ENCODE measurements at regions of chr15 and their contacts with region 1.

Region 1: GRCh38 chr15:69058830-69059556 is 44.5 kb downstream of the NOX5 start:
- DNase-seq: peak; percentile 73 to 94
- H3K4me3 ChIP-seq: no peak overlapping the region
- H3K27ac ChIP-seq: no peak overlapping the region
- H3K4me1 ChIP-seq: peaks cover 3 to 8% (median 5%) of the 10 kb centered on the region in 4 experiments; a peak in 6 of 7 replicates
- H3K27me3 ChIP-seq: no peaks in the 10 kb centered on the region; a peak in 1 of 7 replicates
- CTCF ChIP-seq: peak; percentile 87 to 99 (median 94)
- EP300 ChIP-seq: 0 out of 3 replicates have a peak, but pooled peaks of 1 of the 2 experiments have one; percentile 19
- POLR2A ChIP-seq: no peak
- RAD21 ChIP-seq: peak; percentile 99 to 100

Region 2: DNA sequence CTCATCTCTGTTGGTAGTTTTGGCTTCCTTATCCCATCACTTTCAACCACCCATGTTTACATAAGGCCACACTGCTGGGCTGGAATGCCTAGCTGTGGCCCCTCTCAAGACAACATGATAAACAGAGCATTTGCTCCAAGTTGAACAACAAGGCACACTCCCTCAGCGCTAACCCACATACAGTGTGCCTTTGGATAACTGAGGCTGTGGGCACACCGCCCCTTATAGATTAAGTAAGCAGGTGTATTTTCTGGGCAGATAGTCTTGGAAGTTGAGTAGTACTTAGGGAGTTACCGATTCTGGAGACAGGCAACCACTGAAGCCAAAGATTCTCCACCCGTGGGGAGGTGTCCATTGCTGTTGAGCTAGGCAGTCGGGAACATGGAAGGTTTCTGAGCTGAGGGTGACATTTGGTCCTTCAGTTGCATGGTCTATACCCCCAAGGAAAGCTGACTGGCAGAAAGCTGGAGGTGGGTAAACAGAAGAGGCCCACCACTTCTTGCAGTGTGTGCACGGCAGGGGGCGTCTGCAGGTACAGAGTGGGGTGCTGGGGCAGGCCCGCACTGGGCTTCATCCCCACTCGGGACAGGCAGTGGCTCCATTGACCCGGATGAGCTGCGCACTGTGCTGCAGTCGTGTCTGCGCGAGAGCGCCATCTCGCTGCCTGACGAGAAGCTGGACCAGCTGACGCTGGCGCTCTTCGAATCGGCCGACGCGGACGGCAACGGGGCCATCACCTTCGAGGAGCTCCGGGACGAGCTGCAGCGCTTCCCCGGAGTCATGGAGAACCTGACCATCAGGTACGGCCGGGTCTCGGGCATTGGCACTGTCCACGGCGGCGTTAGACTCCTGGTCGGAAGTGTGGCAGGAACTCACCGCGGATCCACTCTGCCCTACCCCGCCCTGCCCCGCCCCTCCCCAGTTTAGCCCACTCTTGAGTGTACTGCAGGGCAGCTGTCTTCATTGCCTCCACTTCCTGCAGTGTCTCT is 27.7 kb before region 1 on chr15:
- CTCF ChIA-PET with region 1: interaction called, 10 read pairs
- POLR2A ChIA-PET with region 1: interaction called, 3 read pairs
- DNase-seq: peak; percentile 53 to 81
- H3K4me3 ChIP-seq: peak overlapping the region in 2 of 4 experiments; percentile 23 to 50; a peak in 5 of 8 replicates
- H3K27ac ChIP-seq: no peak overlapping the region
- H3K4me1 ChIP-seq: peaks cover 0 to 4% (median 1%) of the 10 kb centered on the region in 4 experiments; a peak in 3 of 7 replicates
- H3K27me3 ChIP-seq: peaks cover 0 to 8% (median 0%) of the 10 kb centered on the region in 4 experiments; a peak in 3 of 7 replicates
- CTCF ChIP-seq: peak; percentile 84 to 92 (median 91)
- EP300 ChIP-seq: peak in 1 of 2 experiments; percentile 34; a peak in 1 of 3 replicates
- POLR2A ChIP-seq: no peak
- RAD21 ChIP-seq: peak; percentile 70 to 80

Region 3: GRCh38 chr15:69045808-69046207 is 13.2 kb before region 1 on chr15:
- CTCF ChIA-PET with region 1: interaction called, 11 read pairs
- POLR2A ChIA-PET with region 1: interaction called, 4 read pairs
- DNase-seq: no peak
- H3K4me3 ChIP-seq: no peak overlapping the region
- H3K27ac ChIP-seq: no peak overlapping the region
- H3K4me1 ChIP-seq: peaks cover 0 to 2% (median 1%) of the 10 kb centered on the region in 4 experiments; a peak in 1 of 7 replicates
- H3K27me3 ChIP-seq: no peaks in the 10 kb centered on the region; a peak in 2 of 7 replicates
- CTCF ChIP-seq: peak in 2 of 3 experiments; percentile 15 to 22; a peak in 2 of 4 replicates
- EP300 ChIP-seq: no peak
- POLR2A ChIP-seq: no peak
- RAD21 ChIP-seq: peak in 1 of 2 experiments; percentile 15; a peak in 1 of 4 replicates

Region 4: GRCh38 chr15:69225355-69226025 is 166.5 kb after region 1 on chr15:
- CTCF ChIA-PET with region 1: interaction called, 28 read pairs
- POLR2A ChIA-PET with region 1: no interaction called
- DNase-seq: no peak
- H3K4me3 ChIP-seq: no peak overlapping the region
- H3K27ac ChIP-seq: no peak overlapping the region
- H3K4me1 ChIP-seq: peaks cover 0 to 8% (median 3%) of the 10 kb centered on the region in 4 experiments; a peak in 4 of 7 replicates
- H3K27me3 ChIP-seq: peaks cover 0 to 1% (median 0%) of the 10 kb centered on the region in 4 experiments; a peak in 1 of 7 replicates
- CTCF ChIP-seq: peak in 2 of 3 experiments; percentile 24 to 38; a peak in 2 of 4 replicates
- EP300 ChIP-seq: no peak
- POLR2A ChIP-seq: no peak
- RAD21 ChIP-seq: peak; percentile 67 to 68

Region 5: GRCh38 chr15:69265347-69265955 is 206.5 kb after region 1 on chr15:
- CTCF ChIA-PET with region 1: interaction called, 70 read pairs
- POLR2A ChIA-PET with region 1: no interaction called
- DNase-seq: no peak
- H3K4me3 ChIP-seq: no peak overlapping the region
- H3K27ac ChIP-seq: no peak overlapping the region
- H3K4me1 ChIP-seq: no peaks in the 10 kb centered on the region
- H3K27me3 ChIP-seq: no peaks in the 10 kb centered on the region
- CTCF ChIP-seq: peak in 2 of 3 experiments; percentile 25 to 49; a peak in 2 of 4 replicates
- EP300 ChIP-seq: no peak
- POLR2A ChIP-seq: no peak
- RAD21 ChIP-seq: peak; percentile 55 to 61

Region 6: DNA sequence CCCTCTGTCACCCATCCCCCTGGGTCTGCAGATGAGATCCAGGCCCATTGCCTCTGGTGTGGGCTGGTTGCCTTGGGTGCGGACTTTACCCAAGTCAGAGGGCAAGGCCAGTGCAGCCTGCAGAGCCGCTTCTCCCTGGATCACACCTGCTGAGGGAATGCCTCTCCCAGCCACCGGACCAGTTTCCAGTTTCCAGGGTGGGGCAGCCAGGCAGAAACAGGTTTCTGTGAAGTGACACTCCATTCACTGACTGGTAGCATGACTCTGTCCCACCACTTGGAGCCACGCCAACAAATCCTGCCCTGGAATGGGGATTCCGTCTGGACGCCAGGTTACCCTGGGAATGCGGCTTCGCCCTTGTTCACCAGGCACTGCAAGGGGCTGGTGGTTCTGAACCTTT is 269.7 kb after region 1 on chr15:
- CTCF ChIA-PET with region 1: no interaction called
- POLR2A ChIA-PET with region 1: no interaction called
- DNase-seq: no peak
- H3K4me3 ChIP-seq: no peak overlapping the region
- H3K27ac ChIP-seq: no peak overlapping the region
- H3K4me1 ChIP-seq: peaks cover 0 to 3% (median 1%) of the 10 kb centered on the region in 4 experiments; a peak in 4 of 7 replicates
- H3K27me3 ChIP-seq: no peaks in the 10 kb centered on the region
- CTCF ChIP-seq: no peak
- EP300 ChIP-seq: no peak
- POLR2A ChIP-seq: no peak
- RAD21 ChIP-seq: no peak

Region 7: GRCh38 chr15:69394556-69395282 is 335.7 kb after region 1 on chr15:
- CTCF ChIA-PET with region 1: interaction called, 18 read pairs
- POLR2A ChIA-PET with region 1: no interaction called
- DNase-seq: peak; percentile 67 to 100
- H3K4me3 ChIP-seq: peak overlapping the region in 1 of 4 experiments; percentile 26; a peak in 1 of 8 replicates
- H3K27ac ChIP-seq: no peak overlapping the region
- H3K4me1 ChIP-seq: peaks cover 0 to 17% (median 7%) of the 10 kb centered on the region in 4 experiments; a peak in 5 of 7 replicates
- H3K27me3 ChIP-seq: no peaks in the 10 kb centered on the region
- CTCF ChIP-seq: peak; percentile 88 to 97 (median 91)
- EP300 ChIP-seq: no peak
- POLR2A ChIP-seq: no peak
- RAD21 ChIP-seq: peak; percentile 88 to 95

Region 8: DNA sequence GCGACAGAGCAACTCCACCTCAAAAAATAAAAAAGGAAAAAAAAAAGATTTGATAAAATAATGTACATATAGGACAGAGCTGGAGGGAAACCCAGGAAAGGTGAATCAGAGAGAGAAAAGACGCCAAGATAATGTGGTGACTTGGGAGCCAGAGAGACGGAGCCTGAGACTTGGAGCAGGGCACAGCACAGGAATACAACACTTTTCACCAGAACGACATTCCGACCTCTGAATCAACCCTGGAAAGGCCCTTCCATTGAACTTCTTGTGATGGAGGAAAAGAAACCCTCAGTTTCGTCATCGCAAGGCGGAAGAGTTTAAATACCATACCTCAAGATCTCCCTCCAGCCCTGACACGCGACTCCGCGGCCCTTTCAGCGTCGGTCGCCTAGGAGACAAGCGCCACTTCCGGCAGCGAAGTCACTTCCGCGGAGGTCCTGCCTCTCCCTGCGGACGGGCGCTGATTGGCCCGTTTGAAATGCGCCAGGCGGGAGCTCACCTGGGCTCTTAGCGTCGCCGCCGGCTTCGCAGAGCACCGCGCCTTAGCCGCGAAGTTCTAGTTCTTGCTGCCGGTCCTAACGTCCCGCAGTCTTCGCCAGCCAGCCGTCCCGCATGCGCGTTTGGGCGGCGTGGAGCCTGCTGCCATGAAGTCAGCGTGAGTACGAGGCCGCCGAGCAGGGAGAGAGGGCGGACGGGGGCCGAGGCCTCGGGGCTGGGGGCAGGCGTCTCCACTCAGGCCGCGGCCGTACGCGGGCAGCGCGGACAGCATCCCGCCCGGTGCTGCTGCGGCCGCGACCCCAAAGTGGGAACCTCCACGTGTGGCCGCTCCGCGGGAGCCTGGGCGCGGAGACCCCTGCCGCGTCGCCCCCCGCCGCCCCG is 355.1 kb after region 1 on chr15 and contains the start of gene KIF23:
- CTCF ChIA-PET with region 1: interaction called, 10 read pairs
- POLR2A ChIA-PET with region 1: no interaction called
- DNase-seq: peak; percentile 84 to 90
- H3K4me3 ChIP-seq: peak within 1 kb of the TSS; percentile 81 to 95 (median 88)
- H3K27ac ChIP-seq: peak within 1 kb of the TSS; percentile 53; the same call in 1 of the 2 replicates
- H3K4me1 ChIP-seq: peaks cover 0 to 2% (median under 1%) of the 10 kb centered on the region in 4 experiments; a peak in 2 of 7 replicates
- H3K27me3 ChIP-seq: no peaks in the 10 kb centered on the region
- CTCF ChIP-seq: no peak
- EP300 ChIP-seq: no peak
- POLR2A ChIP-seq: peak; percentile 76; a peak in 2 of 3 replicates
- RAD21 ChIP-seq: no peak
- total RNA-seq, gene KIF23: 77.2 and 77.4 TPM in 2 replicates

Measured in H1 (cell line).